Activated CD8-positive, alpha-beta T cell treated with anti-CD3 and anti-CD28 coated beads for 36 hours (primary cell): ENCODE measurements at regions of chr9 and their contacts with region 1.

Region 1: GRCh38 chr9:101727612-101728524 is 10.6 kb downstream of the GRIN3A start:
- DNase-seq: peak; percentile 14
- ATAC-seq: no peak
- H3K4me3 Mint-ChIP-seq: no peak overlapping the region
- H3K27ac Mint-ChIP-seq: no peak overlapping the region
- H3K4me1 Mint-ChIP-seq: no peaks in the 10 kb centered on the region
- H3K27me3 Mint-ChIP-seq: peaks cover 7% of the 10 kb centered on the region
- CTCF ChIP-seq: peak; percentile 33

Region 2: GRCh38 chr9:101601904-101602765 is 125.7 kb before region 1 on chr9:
- CTCF ChIA-PET with region 1: no interaction called
- POLR2A ChIA-PET with region 1: no interaction called
- intact Hi-C with region 1: loop called (anchors 5 kb)
- DNase-seq: no peak
- ATAC-seq: no peak
- H3K4me3 Mint-ChIP-seq: no peak overlapping the region
- H3K27ac Mint-ChIP-seq: no peak overlapping the region
- H3K4me1 Mint-ChIP-seq: no peaks in the 10 kb centered on the region
- H3K27me3 Mint-ChIP-seq: no peaks in the 10 kb centered on the region
- CTCF ChIP-seq: peak; percentile 75

Region 3: DNA sequence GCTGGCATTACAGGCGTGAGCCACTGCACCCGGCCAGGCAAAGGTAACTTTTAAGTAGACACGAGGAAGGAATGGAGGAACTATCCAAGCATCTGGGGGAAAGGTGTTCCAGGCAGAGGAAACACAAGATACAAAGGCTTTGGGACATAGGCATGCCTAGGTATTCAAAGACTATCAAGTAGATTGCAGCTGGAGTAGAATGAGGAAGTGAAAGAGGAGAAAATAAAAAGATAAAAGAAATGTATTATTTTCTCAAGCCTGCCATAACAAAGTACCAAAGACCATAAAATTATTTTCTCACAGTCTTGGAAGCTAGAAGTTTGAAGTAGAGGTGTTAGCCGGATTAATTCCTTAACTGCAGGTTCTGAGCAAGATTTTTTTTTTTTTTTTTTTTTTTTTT is 50.5 kb after region 1 on chr9:
- CTCF ChIA-PET with region 1: no interaction called
- POLR2A ChIA-PET with region 1: no interaction called
- intact Hi-C with region 1: no loop called
- DNase-seq: no peak
- ATAC-seq: no peak
- H3K4me3 Mint-ChIP-seq: no peak overlapping the region
- H3K27ac Mint-ChIP-seq: no peak overlapping the region
- H3K4me1 Mint-ChIP-seq: no peaks in the 10 kb centered on the region
- H3K27me3 Mint-ChIP-seq: peaks cover 5% of the 10 kb centered on the region
- CTCF ChIP-seq: no peak